ENCODE measurements at regions of chr10 and their contacts with region 1.

Region 1: DNA sequence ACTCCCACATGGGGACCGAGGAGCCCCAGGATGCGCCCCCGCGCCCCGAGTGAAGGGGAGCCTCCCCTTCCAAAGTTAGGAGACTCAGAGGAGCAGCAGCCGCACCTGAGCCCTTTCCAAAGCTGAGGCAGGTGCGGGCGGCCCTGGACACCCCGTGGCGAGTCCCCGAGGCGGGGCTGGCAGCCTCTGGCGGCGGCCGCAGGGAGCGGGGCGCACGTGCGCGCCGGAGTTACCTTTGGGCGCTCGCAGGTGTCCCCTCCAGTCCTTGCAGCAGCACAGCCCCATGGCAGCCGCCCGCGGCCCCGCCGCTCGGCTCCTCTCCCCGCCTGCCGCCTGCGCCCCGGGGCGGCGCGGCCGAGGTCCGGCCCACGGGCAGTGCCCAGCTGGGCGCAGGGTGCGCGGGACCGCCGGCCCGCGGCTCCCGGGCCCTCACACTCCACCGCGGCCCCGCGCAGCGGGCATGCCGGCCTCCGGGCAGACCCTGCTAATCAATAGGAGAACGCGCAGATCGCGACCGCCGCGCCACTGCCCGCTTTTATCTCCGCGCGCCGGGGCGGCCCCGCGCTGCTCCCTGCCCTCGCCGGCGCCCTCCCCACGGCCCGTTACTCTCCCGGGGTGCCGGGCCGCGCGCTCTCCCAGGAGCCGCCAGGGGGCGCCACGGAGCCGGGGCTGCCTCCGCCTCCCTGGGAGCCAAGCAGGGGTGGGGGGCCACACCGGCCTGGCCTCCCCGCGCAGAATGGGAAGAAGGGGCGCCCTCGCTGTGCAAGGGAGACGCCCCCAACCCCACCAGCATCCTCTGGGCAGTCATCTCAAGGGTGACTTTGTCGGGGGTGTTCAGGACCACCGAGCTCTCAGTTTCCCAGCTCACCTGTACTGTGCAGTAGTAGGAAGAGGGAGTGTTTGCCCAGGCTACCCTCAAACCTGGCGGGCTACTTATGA is 80.8 kb downstream of the ARHGAP22 start:
- DNase-seq: peak; percentile 29 to 43
- ATAC-seq: peak; percentile 75 to 87
- H3K4me3 ChIP-seq: peak overlapping the region; percentile 50
- H3K27ac ChIP-seq: peak overlapping the region; percentile 48 to 80; a peak in 5 of 6 replicates
- H3K4me1 ChIP-seq: 0 out of 3 replicates have a peak, but pooled peaks cover 3% of the 10 kb centered on the region
- CTCF ChIP-seq: peak; percentile 72
- EP300 ChIP-seq: no peak
- POLR2A ChIP-seq: no peak
- RAD21 ChIP-seq: peak in 1 of 2 experiments; percentile 29; a peak in 1 of 5 replicates

Region 2: GRCh38 chr10:48406204-48406603 is 117.9 kb before region 1 on chr10:
- CTCF ChIA-PET with region 1: no interaction called
- POLR2A ChIA-PET with region 1: no interaction called
- DNase-seq: peak; percentile 2 to 32
- ATAC-seq: peak; percentile 73 to 76
- H3K4me3 ChIP-seq: no peak overlapping the region
- H3K27ac ChIP-seq: peak overlapping the region in 1 of 2 experiments; percentile 35; a peak in 1 of 6 replicates
- H3K4me1 ChIP-seq: peaks cover 8% of the 10 kb centered on the region
- CTCF ChIP-seq: no peak
- EP300 ChIP-seq: no peak
- POLR2A ChIP-seq: no peak
- RAD21 ChIP-seq: no peak

Region 3: DNA sequence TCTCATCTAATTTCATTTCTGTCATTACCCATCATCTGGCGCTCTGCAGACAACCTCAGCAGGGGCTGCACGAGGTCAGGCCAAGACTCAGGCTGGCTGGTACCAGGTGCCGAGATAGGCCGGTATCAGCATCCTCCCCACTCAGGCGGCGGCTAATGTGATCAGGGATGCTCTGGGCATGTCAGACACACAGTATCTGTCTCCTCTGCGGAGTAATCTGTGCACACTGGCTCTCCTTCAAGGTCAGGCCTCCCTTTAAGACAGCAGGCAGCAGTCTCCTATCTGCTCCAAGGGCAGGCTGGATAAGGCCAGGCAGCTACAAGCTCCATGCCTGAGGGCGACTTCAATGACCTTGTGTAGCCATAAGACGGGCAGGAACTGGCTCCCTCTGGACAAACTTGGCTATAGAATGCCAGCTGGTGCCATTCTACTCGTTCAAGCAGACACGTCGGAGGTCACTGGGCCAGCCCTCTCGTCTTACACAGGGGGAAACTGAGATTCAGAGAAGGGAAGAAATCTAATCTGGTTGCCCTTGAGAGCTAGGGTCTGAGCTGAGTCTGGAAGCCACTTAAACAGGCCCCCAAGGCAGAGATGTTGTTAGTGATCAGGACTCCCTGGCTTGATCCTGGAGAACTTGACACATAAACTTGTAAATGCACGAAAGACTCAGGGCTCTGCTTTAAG is 21.5 kb after region 1 on chr10:
- CTCF ChIA-PET with region 1: interaction called, 13 read pairs
- POLR2A ChIA-PET with region 1: no interaction called
- DNase-seq: no peak
- ATAC-seq: no peak
- H3K4me3 ChIP-seq: no peak overlapping the region
- H3K27ac ChIP-seq: no peak overlapping the region
- H3K4me1 ChIP-seq: no peaks in the 10 kb centered on the region
- CTCF ChIP-seq: no peak
- EP300 ChIP-seq: no peak
- POLR2A ChIP-seq: no peak
- RAD21 ChIP-seq: no peak

Region 4: GRCh38 chr10:48708144-48708543 is 184.1 kb after region 1 on chr10:
- CTCF ChIA-PET with region 1: no interaction called
- POLR2A ChIA-PET with region 1: no interaction called
- DNase-seq: no peak
- ATAC-seq: no peak
- H3K4me3 ChIP-seq: no peak overlapping the region
- H3K27ac ChIP-seq: no peak overlapping the region
- H3K4me1 ChIP-seq: no peaks in the 10 kb centered on the region
- CTCF ChIP-seq: no peak
- EP300 ChIP-seq: no peak
- POLR2A ChIP-seq: no peak
- RAD21 ChIP-seq: no peak

Measured in A549 (cell line).